ENCODE measurements at regions of chr5 and their contacts with region 1.

Region 1: DNA sequence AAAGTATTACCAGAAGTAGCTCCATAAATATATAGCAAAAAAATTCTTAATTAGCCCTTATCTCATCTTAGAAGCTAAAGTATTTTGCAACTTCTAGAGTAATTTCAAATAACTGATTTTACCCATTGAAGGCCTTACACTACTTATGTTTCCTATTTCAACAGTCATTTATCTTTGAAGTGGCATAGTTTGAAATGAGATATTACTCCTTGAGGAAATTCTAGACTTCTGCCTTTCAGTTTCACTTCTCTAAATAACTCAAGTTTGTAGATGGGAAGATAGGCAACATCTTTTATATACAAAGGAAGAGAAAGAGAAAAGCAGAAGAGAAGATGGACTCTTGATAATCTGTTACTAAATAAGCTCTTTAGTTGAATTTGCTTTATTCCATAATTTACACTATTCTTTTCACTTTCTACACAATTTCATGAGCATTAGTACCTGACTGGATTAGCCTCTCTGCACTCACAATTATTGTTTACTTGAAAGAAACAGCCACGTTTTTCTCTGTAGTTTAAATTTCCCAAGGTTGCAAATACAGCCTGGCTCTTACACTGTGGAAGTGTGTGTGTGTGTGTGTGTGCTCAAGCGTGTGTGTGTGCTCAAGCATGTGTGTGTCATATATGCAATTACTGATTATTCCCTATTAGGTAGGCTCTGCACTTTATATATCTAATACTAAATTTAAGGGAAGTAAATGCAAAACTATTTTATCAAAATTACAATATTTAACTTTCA is 60.6 kb upstream of the EMB start:
- DNase-seq: no peak
- H3K4me3 Mint-ChIP-seq: peak overlapping the region; percentile 38
- H3K27ac Mint-ChIP-seq: peak overlapping the region; percentile 41
- H3K4me1 Mint-ChIP-seq: peaks cover 15% of the 10 kb centered on the region
- H3K27me3 Mint-ChIP-seq: peaks cover 8% of the 10 kb centered on the region

Region 2: DNA sequence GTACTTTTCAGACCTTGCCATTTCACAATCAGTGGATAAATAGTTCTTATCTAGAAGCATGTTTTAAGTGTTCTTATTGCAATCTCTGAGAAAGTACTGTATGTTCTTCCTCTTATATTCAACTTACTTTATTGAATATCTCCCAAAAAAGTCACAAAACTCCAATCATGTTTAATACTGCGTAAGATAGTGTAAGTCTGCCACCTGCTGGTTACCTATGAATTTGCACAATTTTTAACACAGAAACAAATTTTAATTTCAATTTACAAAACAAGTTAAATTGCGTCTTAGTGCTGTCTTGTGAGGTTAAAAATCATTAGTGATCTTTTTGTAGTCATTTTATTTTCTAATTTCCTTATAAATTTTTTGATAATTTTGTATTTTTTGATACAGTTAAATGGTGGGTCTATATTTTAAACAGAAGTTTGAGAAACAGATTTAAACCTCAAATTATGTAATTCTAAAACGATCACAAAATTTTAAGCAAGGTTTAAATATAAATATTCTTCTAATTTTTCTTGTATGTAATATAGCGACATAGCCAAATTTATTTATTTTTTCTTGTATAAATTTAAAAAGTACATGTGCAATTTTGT is 176.3 kb before region 1 on chr5:
- intact Hi-C with region 1: loop called (anchors 1 kb)
- DNase-seq: peak; percentile 66
- H3K4me3 Mint-ChIP-seq: no peak overlapping the region
- H3K27ac Mint-ChIP-seq: no peak overlapping the region
- H3K4me1 Mint-ChIP-seq: peaks cover 18% of the 10 kb centered on the region
- H3K27me3 Mint-ChIP-seq: peaks cover 2% of the 10 kb centered on the region

Region 3: DNA sequence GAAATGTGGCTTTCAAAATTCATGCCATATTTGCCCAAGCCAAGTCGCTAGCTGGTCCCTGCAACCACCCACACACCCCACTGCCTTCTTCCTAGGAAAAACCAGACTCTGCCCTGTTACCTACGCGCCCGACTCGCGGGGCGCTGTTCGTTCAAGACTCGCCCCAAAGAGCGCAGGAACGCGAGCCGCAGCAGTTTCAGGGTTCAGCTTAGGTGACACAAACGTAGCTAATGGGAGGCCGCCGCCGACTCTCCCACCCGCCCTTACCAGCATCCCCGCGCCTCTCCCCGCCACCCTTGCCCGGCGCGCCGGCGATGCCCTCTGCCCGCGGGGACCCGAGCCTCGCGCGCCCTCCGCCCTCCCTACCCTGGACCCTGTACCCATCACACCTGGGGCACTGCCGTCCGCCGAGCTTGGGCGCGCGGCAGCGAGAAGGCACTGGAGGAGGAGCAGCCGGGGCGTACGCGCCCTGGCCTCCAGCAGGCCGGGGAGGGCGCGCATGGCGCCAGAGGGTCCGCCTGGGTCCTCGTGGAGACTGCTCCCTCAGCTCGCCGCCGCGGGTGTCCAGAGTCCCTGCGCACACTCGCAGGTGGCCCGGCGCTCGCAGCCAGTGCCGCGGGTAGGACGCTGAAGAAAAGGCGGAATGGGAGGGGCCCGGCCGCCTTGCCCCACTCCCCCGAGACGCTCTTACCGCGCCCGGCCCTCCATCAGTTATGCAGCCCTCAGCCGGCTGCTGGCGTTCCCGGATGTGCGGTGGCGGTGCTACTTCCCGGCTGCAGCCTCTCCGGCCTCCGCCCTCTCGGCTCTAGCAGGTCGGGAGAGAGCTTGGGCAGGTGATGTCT is 60.8 kb before region 1 on chr5 and contains the start of gene EMB:
- intact Hi-C with region 1: loop called (anchors 2 kb)
- DNase-seq: peak; percentile 93
- H3K4me3 Mint-ChIP-seq: peak within 1 kb of the TSS; percentile 96
- H3K27ac Mint-ChIP-seq: peak within 1 kb of the TSS; percentile 97
- H3K4me1 Mint-ChIP-seq: peaks cover 56% of the 10 kb centered on the region
- H3K27me3 Mint-ChIP-seq: no peaks in the 10 kb centered on the region
- total RNA-seq, gene EMB: 56.3 and 60.3 TPM in 2 replicates

Region 4: DNA sequence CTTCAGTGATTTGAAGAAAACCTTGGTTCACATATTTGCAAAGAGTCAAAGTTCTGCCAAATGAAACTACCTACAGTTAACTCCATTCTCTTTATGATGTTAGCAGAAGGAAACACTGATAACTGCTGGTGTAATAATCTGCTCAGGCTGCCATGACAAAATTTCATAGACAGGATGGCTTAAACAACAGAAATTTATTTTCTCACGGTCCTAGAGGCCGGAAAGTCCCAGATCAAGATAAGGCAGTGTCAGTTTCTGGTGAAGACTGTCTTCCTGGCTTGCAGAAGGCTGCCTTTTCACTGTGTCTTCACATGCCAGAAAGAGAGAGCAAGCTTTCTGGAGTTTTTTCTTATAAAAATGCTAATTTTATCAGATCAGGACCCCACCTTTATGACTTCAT is 62.4 kb after region 1 on chr5:
- intact Hi-C with region 1: loop called (anchors 10 kb)
- DNase-seq: peak; percentile 85
- H3K4me3 Mint-ChIP-seq: peak overlapping the region; percentile 57
- H3K27ac Mint-ChIP-seq: peak overlapping the region; percentile 45
- H3K4me1 Mint-ChIP-seq: peaks cover 27% of the 10 kb centered on the region
- H3K27me3 Mint-ChIP-seq: no peaks in the 10 kb centered on the region

Region 5: GRCh38 chr5:50593681-50594080 is 92.0 kb after region 1 on chr5:
- intact Hi-C with region 1: loop called (anchors 5 kb)
- DNase-seq: peak; percentile 76
- H3K4me3 Mint-ChIP-seq: peak overlapping the region; percentile 41
- H3K27ac Mint-ChIP-seq: peak overlapping the region; percentile 49
- H3K4me1 Mint-ChIP-seq: peaks cover 41% of the 10 kb centered on the region
- H3K27me3 Mint-ChIP-seq: no peaks in the 10 kb centered on the region

Region 6: GRCh38 chr5:50667653-50668595 is 166.3 kb after region 1 on chr5:
- intact Hi-C with region 1: loop called (anchors 10 kb)
- DNase-seq: peak; percentile 95
- H3K4me3 Mint-ChIP-seq: peak overlapping the region; percentile 99
- H3K27ac Mint-ChIP-seq: peak overlapping the region; percentile 100
- H3K4me1 Mint-ChIP-seq: peaks cover 48% of the 10 kb centered on the region
- H3K27me3 Mint-ChIP-seq: no peaks in the 10 kb centered on the region

Region 7: DNA sequence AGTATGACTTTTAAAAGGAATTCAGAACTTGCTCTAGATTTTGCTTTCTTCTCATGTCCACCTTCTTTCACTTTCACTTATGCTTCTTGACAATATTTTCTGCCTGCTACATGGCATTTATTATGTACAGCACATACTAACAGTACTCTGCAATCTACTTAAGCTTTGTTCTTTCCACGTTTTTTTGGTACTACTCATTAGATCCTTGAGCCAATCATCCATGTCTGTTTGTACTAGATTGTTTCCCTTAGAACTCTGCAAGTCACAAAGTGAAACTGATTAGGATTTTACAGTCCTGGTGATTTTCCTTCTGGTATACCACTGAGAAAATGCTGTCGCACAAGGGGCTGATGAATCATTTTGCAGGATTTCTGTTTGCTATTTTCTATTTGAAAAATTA is 243.1 kb after region 1 on chr5:
- intact Hi-C with region 1: loop called (anchors 5 kb)
- DNase-seq: no peak
- H3K4me3 Mint-ChIP-seq: peak overlapping the region; percentile 90
- H3K27ac Mint-ChIP-seq: peak overlapping the region; percentile 91
- H3K4me1 Mint-ChIP-seq: peaks cover 51% of the 10 kb centered on the region
- H3K27me3 Mint-ChIP-seq: no peaks in the 10 kb centered on the region